ENCODE measurements at regions of chr10 and their contacts with region 1.

Region 1: DNA sequence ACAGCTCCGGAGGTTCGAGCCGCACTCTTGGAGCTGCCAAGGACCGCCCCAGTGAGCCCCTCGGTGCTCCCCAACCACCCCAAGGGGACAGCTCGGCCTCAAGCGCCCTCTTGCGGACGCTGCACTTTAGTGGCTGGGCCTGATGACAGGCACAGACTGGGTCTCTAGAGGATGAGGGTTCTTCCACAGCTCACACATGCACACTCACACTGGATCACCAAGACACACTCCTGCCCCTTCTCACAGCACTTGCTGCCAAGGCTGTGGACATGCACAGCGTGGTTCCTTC is 2.1 kb downstream of the RET start:
- DNase-seq: peak in 1 of 3 donors; percentile 66
- ATAC-seq: peak; percentile 22 to 58 (median 56)
- H3K4me3 ChIP-seq: no peak overlapping the region
- H3K27ac ChIP-seq: no peak overlapping the region
- H3K4me1 ChIP-seq: peaks cover 0 to 7% (median 0%) of the 10 kb centered on the region in 4 donors
- H3K27me3 ChIP-seq: no peaks in the 10 kb centered on the region
- CTCF ChIP-seq: peak; percentile 49 to 74 (median 64)
- POLR2A ChIP-seq: no peak

Region 2: GRCh38 chr10:42782446-42783180 is 296.3 kb before region 1 on chr10 and contains the start of gene BMS1:
- intact Hi-C with region 1: no loop called
- DNase-seq: peak; percentile 90 to 92 (median 91)
- ATAC-seq: peak; percentile 94 to 96 (median 96)
- H3K4me3 ChIP-seq: peak within 1 kb of the TSS; percentile 77 to 85 (median 79)
- H3K27ac ChIP-seq: peak within 1 kb of the TSS; percentile 94 to 95 (median 94)
- H3K4me1 ChIP-seq: peaks cover 0 to 7% (median 0%) of the 10 kb centered on the region in 4 donors
- H3K27me3 ChIP-seq: no peaks in the 10 kb centered on the region
- CTCF ChIP-seq: no peak
- POLR2A ChIP-seq: peak; percentile 80
- total RNA-seq, gene BMS1: 4.1 to 8.3 (median 5.8) TPM

Region 3: GRCh38 chr10:42898037-42898960 is 180.6 kb before region 1 on chr10:
- intact Hi-C with region 1: no loop called
- DNase-seq: no peak
- ATAC-seq: no peak
- H3K4me3 ChIP-seq: no peak overlapping the region
- H3K27ac ChIP-seq: no peak overlapping the region
- H3K4me1 ChIP-seq: no peaks in the 10 kb centered on the region
- H3K27me3 ChIP-seq: peaks cover 0 to 4% of the 10 kb centered on the region in 2 donors
- CTCF ChIP-seq: no peak
- POLR2A ChIP-seq: no peak

Region 4: GRCh38 chr10:42952349-42952748 is 126.6 kb before region 1 on chr10:
- intact Hi-C with region 1: loop called in 1 of 2 experiments (anchors 10 kb)
- DNase-seq: peak; percentile 47 to 70 (median 60)
- ATAC-seq: peak; percentile 83 to 90 (median 88)
- H3K4me3 ChIP-seq: no peak overlapping the region
- H3K27ac ChIP-seq: no peak overlapping the region
- H3K4me1 ChIP-seq: peaks cover 0 to 12% (median 0%) of the 10 kb centered on the region in 4 donors
- H3K27me3 ChIP-seq: no peaks in the 10 kb centered on the region
- CTCF ChIP-seq: no peak
- POLR2A ChIP-seq: no peak

Region 5: DNA sequence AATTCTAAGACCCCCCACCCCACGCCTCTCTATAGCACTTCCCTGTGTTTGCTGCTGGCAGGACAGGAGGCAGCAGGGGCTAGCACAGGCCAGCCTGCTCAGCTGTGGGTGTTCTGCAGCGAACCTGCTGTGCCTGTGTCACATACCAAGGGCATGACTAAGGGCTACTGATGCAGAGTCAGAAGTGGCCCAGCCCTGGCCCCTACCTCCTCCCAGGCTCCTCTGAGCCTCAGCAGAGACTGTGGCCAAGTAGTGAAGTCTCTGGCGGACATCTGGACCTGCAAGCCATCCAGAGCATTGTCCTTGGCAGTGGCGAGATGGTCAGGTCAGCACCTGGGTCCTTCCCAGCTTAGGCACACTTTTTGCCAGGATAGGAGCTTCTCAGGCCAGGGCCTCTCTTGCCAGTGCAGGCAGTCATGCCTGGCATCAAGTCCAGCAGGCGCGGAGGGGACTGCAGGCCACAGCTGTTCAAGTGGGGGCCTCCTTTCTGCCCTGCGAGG is 118.4 kb before region 1 on chr10:
- intact Hi-C with region 1: loop called (anchors 10 kb)
- DNase-seq: peak; percentile 13 to 28 (median 28)
- ATAC-seq: peak in 1 of 4 donors; percentile 23
- H3K4me3 ChIP-seq: no peak overlapping the region
- H3K27ac ChIP-seq: no peak overlapping the region
- H3K4me1 ChIP-seq: no peaks in the 10 kb centered on the region
- H3K27me3 ChIP-seq: no peaks in the 10 kb centered on the region
- CTCF ChIP-seq: no peak
- POLR2A ChIP-seq: no peak

Region 6: GRCh38 chr10:43436400-43437140 is 357.6 kb after region 1 on chr10 and contains the start of gene ZNF487:
- intact Hi-C with region 1: no loop called
- DNase-seq: peak; percentile 92 to 93 (median 93)
- ATAC-seq: peak; percentile 95 to 98 (median 96)
- H3K4me3 ChIP-seq: peak within 1 kb of the TSS; percentile 81 to 96 (median 91)
- H3K27ac ChIP-seq: peak within 1 kb of the TSS; percentile 98 to 99 (median 99)
- H3K4me1 ChIP-seq: peaks cover 0 to 12% (median 0%) of the 10 kb centered on the region in 4 donors
- H3K27me3 ChIP-seq: no peaks in the 10 kb centered on the region
- CTCF ChIP-seq: peak in 1 of 4 donors; percentile 36
- POLR2A ChIP-seq: peak; percentile 96
- total RNA-seq, gene ZNF487: 1.4 to 3.0 (median 1.8) TPM